ENCODE measurements at regions of chr16 and their contacts with region 1.

Region 1: DNA sequence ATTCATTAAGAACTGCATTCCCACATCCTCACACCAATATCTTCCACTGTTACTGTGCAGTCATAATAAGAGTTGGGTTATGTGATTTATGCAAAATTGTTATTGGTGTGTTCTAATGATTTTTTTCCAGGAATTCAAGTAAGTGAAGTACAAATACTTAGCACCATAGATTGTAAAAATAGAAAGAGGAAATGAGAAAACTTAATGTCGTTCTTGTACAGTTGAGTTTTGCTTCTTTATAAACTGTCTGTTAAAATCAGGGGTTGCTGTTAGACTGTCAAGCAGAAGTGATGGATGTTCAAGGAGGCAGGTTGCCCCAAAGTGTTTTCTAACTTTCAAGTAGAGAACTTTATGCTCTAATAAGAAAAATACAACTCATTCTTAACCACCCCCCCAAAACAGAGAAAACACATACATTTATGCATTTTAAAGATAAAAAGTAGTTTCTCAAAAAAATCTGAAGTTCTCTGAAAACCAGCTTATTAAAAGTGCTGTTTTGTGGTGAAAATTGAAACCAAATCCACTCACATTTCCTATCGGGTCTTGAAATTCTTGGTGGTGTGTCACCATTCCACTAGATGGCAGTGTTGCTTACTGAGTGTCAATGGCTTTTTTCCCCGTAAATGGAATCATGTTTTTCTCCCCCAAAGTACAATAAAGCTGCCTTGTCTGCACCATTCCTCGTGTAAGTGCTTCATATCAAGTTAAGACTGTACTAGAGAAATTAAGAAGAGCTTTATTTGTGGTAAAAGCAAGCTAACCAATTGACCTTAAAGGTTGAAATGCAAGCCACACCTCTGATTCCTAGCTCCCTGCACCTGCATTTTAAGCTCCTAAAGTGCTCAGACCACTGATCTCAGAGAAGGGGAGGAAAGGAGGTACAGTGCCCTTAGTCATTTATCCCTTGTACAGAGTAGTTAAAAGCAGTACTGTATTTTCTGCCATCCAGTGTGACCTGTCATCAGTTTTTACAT is 4.7 kb upstream of the IGSF6 start:
- DNase-seq: no peak
- H3K4me3 ChIP-seq: no peak overlapping the region
- CTCF ChIP-seq: peak; percentile 73

Region 2: DNA sequence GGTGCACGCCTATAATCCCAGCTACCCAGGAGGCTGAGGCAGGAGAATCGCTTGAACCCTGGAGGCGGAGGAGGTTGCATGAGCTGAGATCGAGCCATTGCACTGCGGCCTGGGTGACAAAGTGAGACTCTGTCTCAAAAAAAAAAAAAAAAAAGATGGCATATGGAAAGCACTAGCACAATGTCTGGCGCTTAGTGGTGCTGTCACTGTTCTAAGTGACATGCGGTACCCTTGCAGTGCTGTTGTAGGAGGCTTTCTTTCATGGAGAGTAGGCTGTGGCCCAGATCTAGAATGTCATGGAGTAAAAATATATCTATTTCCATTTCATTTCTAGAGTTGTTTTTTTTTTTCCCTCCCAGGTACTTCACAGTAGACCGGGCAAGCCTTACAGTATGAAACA is 72.3 kb before region 1 on chr16:
- CTCF ChIA-PET with region 1: interaction called, 33 read pairs
- POLR2A ChIA-PET with region 1: no interaction called
- DNase-seq: no peak
- H3K4me3 ChIP-seq: no peak overlapping the region
- CTCF ChIP-seq: no peak

Region 3: DNA sequence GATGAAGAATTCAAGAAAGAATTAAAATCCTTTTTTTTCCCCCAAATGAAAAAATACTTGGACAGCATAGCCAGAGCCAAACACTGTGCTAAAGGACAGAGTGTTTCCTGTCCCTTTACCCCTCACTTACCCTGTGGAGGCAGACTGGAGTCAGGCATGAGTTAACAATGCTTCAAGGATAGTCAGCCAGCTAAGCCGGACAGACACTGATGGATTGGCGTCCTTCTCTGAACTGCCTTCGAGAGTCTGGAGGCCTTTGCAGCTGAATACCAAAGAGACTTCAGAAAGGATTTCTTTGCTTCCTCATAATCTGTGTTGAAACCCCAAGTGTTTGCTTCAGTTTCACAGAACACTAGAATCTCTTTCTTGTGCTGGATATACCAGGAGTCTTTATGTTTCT is 53.2 kb before region 1 on chr16:
- CTCF ChIA-PET with region 1: interaction called, 11 read pairs
- POLR2A ChIA-PET with region 1: interaction called, 5 read pairs
- DNase-seq: no peak
- H3K4me3 ChIP-seq: no peak overlapping the region
- CTCF ChIP-seq: no peak

Region 4: GRCh38 chr16:21646721-21647561 is 10.1 kb before region 1 on chr16:
- CTCF ChIA-PET with region 1: interaction called, 150 read pairs
- POLR2A ChIA-PET with region 1: no interaction called
- DNase-seq: no peak
- H3K4me3 ChIP-seq: no peak overlapping the region
- CTCF ChIP-seq: no peak

Region 5: DNA sequence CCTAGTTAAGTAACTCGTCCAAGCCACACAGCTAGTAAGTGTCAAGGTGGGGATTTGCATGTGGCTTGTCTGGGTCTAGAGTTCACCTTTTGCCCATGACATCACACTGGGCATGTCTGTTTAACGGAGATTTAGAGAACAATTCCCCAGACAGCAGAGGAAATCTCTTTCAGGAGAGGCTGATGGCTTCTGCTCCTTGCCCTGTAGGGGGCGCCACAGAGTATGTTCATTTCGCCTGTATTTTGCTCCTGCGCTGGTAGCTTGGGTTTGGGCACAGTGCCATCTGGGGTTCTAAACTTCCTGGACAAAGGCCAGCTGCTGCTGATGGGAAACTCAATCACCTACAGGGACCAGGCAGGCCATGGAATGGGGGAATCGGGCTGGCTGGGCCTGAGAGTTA is 27.1 kb after region 1 on chr16:
- CTCF ChIA-PET with region 1: interaction called, 13 read pairs
- POLR2A ChIA-PET with region 1: no interaction called
- DNase-seq: no peak
- H3K4me3 ChIP-seq: no peak overlapping the region
- CTCF ChIP-seq: peak; percentile 13

Region 6: GRCh38 chr16:21708533-21709115 is 51.5 kb after region 1 on chr16:
- CTCF ChIA-PET with region 1: interaction called, 91 read pairs
- POLR2A ChIA-PET with region 1: no interaction called
- DNase-seq: peak; percentile 7
- H3K4me3 ChIP-seq: no peak overlapping the region
- CTCF ChIP-seq: peak; percentile 53

Region 7: DNA sequence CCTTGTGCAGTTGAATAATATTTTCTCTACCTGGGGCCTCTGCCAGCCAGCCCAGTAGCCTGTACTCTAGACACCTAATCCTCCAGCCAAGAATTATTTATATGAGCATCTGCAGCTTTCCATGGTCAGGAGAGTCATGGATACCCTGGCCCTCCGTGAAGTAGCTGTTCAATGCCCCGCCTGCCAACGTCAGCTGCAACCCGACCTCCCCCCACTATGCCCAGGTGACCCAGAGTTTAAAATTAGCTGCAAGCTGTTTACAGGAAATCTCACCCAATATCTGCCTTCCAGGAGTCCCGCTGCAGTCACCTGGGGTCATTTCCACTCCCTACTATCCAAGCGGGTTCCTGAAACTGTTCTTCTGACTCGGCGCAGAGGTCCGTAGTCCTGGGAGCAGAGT is 517.6 kb after region 1 on chr16:
- CTCF ChIA-PET with region 1: no interaction called
- POLR2A ChIA-PET with region 1: no interaction called
- DNase-seq: no peak
- H3K4me3 ChIP-seq: no peak overlapping the region
- CTCF ChIP-seq: no peak

Measured in AG04449 (cell line).